GM10248 (cell line): ENCODE measurements at regions of chr20 and their contacts with region 1.

Region 1: GRCh38 chr20:18632196-18633009 is 44.5 kb downstream of the DTD1 start:
- DNase-seq: peak; percentile 62
- CTCF ChIP-seq: peak; percentile 99

Region 2: DNA sequence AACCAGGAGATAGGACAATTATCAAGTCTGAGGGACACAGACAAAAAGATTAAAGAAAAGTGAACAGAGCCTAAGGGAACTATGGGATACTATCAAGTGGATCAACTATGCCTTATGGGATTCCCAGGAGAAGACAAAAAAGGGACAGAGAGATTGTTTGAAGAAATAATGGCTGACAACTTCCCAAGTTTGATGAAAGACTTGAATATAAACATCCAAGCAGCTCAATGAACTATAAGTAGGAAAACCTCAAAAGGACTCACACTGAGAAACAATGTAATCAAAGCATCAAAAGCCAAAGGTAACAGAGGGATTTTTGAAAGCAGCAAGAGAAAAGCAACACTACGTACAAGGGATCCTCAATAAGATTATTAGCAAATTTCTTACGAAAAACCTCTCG is 333.0 kb before region 1 on chr20:
- CTCF ChIA-PET with region 1: no interaction called
- POLR2A ChIA-PET with region 1: no interaction called
- DNase-seq: no peak
- CTCF ChIP-seq: no peak

Region 3: DNA sequence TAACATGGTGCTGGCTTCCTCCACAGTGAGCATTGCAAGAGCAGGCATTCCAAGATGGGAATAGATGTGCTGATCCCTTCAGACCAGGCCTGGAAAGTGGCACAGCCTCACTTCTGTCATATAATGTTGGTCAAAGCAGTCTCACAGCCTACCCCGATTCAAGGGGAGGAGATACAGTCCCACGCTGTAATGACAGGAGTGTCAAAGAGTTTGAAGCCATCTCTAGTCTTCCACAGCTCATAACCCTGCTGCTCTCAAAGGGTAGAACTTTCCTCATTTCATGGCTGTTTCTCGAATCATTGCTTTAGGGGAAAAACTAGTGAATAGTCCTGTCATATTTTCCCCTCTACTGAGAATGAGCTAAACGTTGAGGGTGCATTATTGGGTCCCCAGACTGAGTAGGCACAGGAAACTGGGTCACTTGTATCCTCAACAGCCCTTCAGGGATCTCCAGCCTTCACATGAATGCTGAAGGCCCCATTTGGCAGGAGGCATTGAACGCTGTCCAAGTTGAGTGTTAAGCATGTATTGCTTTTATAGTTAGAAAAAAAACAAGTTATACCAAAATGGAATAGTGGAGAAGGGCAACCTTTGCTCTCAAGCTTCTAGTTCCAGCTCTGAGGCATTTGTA is 17.3 kb before region 1 on chr20:
- CTCF ChIA-PET with region 1: interaction called, 15 read pairs
- POLR2A ChIA-PET with region 1: no interaction called
- DNase-seq: no peak
- CTCF ChIP-seq: no peak

Region 4: GRCh38 chr20:18650224-18650623 is 17.8 kb after region 1 on chr20:
- CTCF ChIA-PET with region 1: interaction called, 21 read pairs
- POLR2A ChIA-PET with region 1: no interaction called
- DNase-seq: no peak
- CTCF ChIP-seq: no peak

Region 5: DNA sequence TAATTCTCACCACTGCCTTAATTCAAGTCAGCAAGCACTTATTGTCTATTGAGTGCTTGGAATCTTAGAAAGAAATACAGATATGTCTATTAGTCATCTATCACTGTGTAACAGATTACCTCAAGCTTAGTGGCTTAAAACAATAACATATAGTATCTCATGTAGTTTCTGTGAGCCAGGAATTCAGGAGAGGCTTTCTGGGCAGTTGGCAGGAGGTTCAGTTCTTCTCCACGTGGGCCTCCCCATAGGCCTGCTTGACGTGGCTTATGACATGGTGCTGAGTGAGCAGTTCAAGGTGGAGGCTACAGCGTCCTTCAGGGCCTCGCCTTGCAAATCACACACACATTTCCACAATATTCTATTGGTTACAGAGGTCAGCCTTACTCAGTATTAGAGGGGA is 25.2 kb after region 1 on chr20:
- CTCF ChIA-PET with region 1: interaction called, 21 read pairs
- POLR2A ChIA-PET with region 1: no interaction called
- DNase-seq: no peak
- CTCF ChIP-seq: no peak

Region 6: DNA sequence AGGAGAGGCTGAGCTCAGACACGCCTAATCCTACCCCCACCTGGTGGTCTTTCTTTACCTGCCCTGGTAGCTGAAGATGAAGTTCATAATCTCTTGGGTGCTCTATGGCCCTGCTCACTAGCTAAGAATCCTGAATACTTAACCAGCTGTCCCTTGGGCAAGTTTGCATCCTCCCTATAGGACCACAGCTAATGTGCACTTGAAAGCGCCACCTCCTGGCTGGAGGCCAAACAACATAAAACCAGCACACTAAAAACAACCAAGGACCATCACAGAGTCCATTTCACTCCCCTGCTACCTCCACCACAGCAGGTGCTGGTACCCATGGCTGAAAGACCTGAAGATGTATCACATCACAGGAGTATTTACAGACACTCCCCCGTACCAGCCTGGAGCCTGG is 424.5 kb after region 1 on chr20:
- CTCF ChIA-PET with region 1: interaction called, 22 read pairs
- POLR2A ChIA-PET with region 1: no interaction called
- DNase-seq: no peak
- CTCF ChIP-seq: no peak